Activated CD4-positive, alpha-beta T cell treated with anti-CD3 and anti-CD28 coated beads for 36 hours (primary cell): ENCODE measurements at regions of chr1 and their contacts with region 1.

Region 1: DNA sequence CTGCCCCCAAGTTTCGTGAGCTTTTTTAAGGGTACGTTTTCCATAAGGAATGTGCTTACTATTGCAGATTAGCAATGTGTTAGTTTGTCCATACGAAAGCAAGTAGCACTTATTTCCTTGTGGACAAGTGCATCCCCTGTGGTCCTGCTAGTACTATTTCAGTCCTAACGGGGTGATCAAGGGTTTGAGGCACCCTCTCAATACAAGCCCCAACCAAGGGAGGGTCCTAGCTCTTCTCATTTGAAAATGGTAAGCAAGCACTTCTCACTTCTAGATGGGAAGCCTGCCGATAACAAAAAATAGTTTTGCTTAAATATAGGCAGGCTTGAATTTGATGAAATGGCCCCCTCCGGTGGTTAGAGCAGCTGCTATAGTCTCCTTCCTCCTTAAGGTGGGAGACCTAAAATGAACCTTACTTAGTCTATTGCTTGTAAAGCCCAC is 64.0 kb upstream of the HMCN1 start:
- DNase-seq: peak; percentile 64
- ATAC-seq: peak; percentile 85
- H3K4me3 Mint-ChIP-seq: no peak overlapping the region
- H3K27ac Mint-ChIP-seq: no peak overlapping the region
- H3K4me1 Mint-ChIP-seq: peaks cover 23% of the 10 kb centered on the region
- H3K27me3 Mint-ChIP-seq: no peaks in the 10 kb centered on the region

Region 2: DNA sequence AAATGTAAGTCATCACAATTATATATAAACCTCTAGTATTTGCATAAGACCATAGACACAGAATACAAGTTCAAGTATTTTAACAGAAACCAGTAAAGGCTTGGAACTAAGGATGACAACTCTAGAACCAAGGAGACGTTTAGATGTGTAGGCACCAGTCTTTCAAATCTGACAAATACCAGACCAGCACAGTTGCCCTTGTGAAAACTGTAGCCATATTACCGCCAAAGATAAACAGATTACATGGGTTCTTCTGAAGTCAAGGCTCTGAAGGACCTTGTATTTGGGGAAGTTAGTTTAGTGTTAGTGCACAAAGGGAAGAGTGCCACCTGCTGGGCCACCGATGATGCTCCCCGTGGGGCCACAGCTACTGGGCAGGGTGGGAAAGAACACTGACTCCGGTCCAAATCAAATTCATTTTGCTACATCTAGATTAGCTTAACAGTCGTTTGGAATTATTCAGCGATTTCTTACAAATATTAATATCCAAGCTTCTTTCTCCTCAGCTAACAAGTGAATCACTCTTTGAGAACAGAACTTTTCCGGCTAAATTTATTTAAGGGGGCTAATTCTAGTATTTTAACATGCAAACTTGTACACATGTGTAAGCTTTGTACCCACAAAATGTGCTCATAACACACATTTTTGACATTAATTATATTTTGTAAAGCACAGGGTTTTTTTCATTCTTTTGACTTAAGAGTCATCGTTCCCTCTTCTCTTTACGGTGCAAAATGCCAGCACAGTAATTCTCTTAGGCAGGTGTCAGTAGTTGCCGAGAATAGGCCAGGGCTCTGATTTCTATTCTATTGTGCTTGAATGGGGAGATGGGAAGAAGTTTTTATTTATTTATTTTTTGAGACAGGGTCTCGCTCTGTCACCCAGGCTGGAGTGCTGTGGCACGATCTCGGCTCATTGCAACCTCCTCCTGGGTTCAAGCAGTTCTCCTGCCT is 687.9 kb before region 1 on chr1:
- CTCF ChIA-PET with region 1: no interaction called
- POLR2A ChIA-PET with region 1: no interaction called
- intact Hi-C with region 1: loop called in 1 of 2 experiments (anchors 10 kb)
- DNase-seq: peak; percentile 88
- ATAC-seq: peak; percentile 99
- H3K4me3 Mint-ChIP-seq: no peak overlapping the region
- H3K27ac Mint-ChIP-seq: no peak overlapping the region
- H3K4me1 Mint-ChIP-seq: peaks cover 4% of the 10 kb centered on the region
- H3K27me3 Mint-ChIP-seq: peaks cover 16% of the 10 kb centered on the region

Region 3: GRCh38 chr1:185238447-185238846 is 431.8 kb before region 1 on chr1:
- CTCF ChIA-PET with region 1: interaction called, 9 read pairs
- POLR2A ChIA-PET with region 1: no interaction called
- intact Hi-C with region 1: loop called in 1 of 2 experiments (anchors 5 kb)
- DNase-seq: no peak
- ATAC-seq: no peak
- H3K4me3 Mint-ChIP-seq: no peak overlapping the region
- H3K27ac Mint-ChIP-seq: no peak overlapping the region
- H3K4me1 Mint-ChIP-seq: peaks cover 29% of the 10 kb centered on the region
- H3K27me3 Mint-ChIP-seq: no peaks in the 10 kb centered on the region

Region 4: DNA sequence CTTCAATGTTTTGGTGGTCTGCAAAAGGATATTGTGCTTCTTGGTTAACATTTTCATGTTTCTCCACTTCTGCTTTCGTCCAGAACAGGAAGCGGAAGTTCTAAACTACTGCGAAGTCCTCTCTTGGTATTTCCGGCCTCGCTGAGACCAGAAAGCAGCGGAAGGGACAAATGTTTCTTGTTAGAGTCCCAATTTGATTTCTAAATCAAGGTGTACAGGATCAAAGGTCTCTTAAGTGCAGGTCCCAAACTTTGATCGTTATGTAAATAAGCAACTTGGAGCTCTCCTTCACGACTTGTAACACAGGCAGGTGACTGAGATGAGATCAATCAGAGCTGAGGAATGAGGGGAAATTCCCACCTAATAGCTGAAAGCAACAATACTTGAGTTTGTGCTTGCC is 23.9 kb after region 1 on chr1:
- CTCF ChIA-PET with region 1: interaction called, 11 read pairs
- POLR2A ChIA-PET with region 1: no interaction called
- intact Hi-C with region 1: no loop called
- DNase-seq: peak; percentile 41
- ATAC-seq: peak; percentile 48
- H3K4me3 Mint-ChIP-seq: peak overlapping the region; percentile 65
- H3K27ac Mint-ChIP-seq: peak overlapping the region; percentile 91
- H3K4me1 Mint-ChIP-seq: peaks cover 18% of the 10 kb centered on the region
- H3K27me3 Mint-ChIP-seq: peaks cover 4% of the 10 kb centered on the region